Psoas muscle (tissue), 8 donors: ENCODE measurements at regions of chr7 and their contacts with region 1.

Region 1: GRCh38 chr7:28029051-28029450 is 151.5 kb downstream of the JAZF1 start:
- DNase-seq: no peak
- ATAC-seq: no peak
- H3K4me3 ChIP-seq: no peak overlapping the region
- H3K27ac ChIP-seq: no peak overlapping the region
- H3K4me1 ChIP-seq: peaks cover 13% of the 10 kb centered on the region
- H3K27me3 ChIP-seq: no peaks in the 10 kb centered on the region
- CTCF ChIP-seq: no peak

Region 2: GRCh38 chr7:27344471-27344870 is 684.6 kb before region 1 on chr7:
- intact Hi-C with region 1: loop called in 1 of 2 experiments (anchors 5 kb)
- DNase-seq: no peak
- ATAC-seq: no peak
- H3K4me3 ChIP-seq: no peak overlapping the region
- H3K27ac ChIP-seq: no peak overlapping the region
- H3K4me1 ChIP-seq: no peaks in the 10 kb centered on the region
- H3K27me3 ChIP-seq: peaks cover 0 to 8% (median 4%) of the 10 kb centered on the region in 3 donors
- CTCF ChIP-seq: no peak

Region 3: DNA sequence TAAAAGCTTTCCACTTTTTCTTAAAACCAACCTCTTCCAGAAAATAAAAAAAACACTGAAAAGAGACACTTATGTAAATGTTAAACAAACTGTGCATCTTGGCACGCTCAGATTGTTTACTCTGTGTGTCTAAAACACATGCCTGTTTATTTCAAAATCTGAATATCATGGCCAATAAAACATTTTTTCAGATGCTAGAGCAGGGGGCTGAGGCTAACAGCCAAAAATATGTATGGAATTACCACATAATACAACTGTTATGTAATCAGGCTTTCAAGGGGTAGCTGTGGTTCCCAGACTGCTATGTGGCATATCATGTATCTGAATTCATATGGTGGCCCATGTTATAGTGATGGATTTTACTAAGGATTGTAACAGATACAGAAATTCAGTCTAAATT is 496.7 kb before region 1 on chr7:
- intact Hi-C with region 1: no loop called
- DNase-seq: no peak
- ATAC-seq: no peak
- H3K4me3 ChIP-seq: no peak overlapping the region
- H3K27ac ChIP-seq: no peak overlapping the region
- H3K4me1 ChIP-seq: no peaks in the 10 kb centered on the region
- H3K27me3 ChIP-seq: no peaks in the 10 kb centered on the region
- CTCF ChIP-seq: no peak

Region 4: DNA sequence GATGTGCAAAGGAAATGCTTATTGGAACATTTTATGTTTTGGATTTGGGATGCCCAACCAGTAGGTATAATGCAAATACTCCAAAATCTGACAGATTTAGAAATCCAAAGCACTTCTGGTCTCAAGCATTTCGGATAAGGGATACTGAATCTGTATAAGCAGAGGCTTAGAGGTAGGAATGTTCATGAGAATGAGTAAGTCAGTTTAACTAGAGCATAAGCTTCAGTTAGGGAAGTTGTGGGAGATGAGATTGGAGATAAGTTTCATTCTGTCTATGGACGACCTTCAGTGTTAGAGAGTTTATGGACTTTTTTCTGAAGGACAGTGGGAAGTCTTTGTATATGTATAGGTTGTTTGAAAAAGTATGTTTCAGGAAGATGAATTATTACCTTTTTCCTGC is 278.7 kb before region 1 on chr7:
- intact Hi-C with region 1: no loop called
- DNase-seq: no peak
- ATAC-seq: no peak
- H3K4me3 ChIP-seq: no peak overlapping the region
- H3K27ac ChIP-seq: no peak overlapping the region
- H3K4me1 ChIP-seq: peaks cover 32% of the 10 kb centered on the region
- H3K27me3 ChIP-seq: no peaks in the 10 kb centered on the region
- CTCF ChIP-seq: no peak

Region 5: GRCh38 chr7:28155019-28155660 is 126.1 kb after region 1 on chr7:
- intact Hi-C with region 1: no loop called
- DNase-seq: no peak
- ATAC-seq: no peak
- H3K4me3 ChIP-seq: no peak overlapping the region
- H3K27ac ChIP-seq: no peak overlapping the region
- H3K4me1 ChIP-seq: peaks cover 15% of the 10 kb centered on the region
- H3K27me3 ChIP-seq: no peaks in the 10 kb centered on the region
- CTCF ChIP-seq: no peak

Region 6: DNA sequence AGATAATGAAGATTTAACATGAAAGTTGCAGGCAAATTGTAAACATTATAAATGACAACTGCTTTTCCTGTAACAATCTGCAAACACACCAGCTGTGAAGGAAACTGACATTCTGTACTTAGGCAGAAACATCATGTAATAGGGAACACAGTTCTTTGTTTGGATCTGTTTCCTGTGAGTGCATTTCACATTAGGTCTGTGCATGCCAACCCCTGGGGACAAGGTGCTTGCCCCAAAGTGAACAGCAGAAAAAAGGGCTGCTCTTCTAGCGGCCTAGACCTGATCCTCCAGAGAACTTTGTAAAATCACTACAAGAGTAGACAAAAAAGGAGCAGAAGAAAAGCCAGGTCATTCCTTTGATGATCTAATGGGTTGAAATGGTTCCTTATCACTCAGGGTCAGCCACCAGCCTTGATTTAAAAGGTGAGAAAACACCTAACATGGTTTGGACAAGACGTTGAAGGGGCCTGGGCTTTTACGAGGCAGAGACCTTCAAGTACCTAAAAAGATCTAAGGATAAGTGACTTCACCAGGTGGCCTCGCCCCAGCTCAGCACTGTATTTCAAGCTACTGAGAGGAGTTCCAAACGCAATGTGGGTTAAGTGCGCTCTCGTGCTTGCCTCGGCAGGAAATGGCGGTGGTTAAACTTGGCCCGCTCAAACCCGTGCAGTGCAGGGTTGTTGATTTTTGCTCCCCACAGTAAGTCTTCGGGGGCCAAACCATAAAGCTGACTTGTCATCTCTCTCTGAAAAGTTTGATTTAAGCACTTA is 633.0 kb after region 1 on chr7:
- intact Hi-C with region 1: no loop called
- DNase-seq: no peak
- ATAC-seq: no peak
- H3K4me3 ChIP-seq: no peak overlapping the region
- H3K27ac ChIP-seq: no peak overlapping the region
- H3K4me1 ChIP-seq: no peaks in the 10 kb centered on the region
- H3K27me3 ChIP-seq: no peaks in the 10 kb centered on the region
- CTCF ChIP-seq: no peak